ENCODE measurements at regions of chr11 and their contacts with region 1.

Region 1: GRCh38 chr11:126355324-126355925 is at the start of gene ST3GAL4:
- DNase-seq: peak; percentile 82
- H3K4me3 Mint-ChIP-seq: peak within 1 kb of the TSS; percentile 92
- H3K27ac Mint-ChIP-seq: peak within 1 kb of the TSS; percentile 78
- H3K4me1 Mint-ChIP-seq: peaks cover 34% of the 10 kb centered on the region
- H3K27me3 Mint-ChIP-seq: no peaks in the 10 kb centered on the region
- total RNA-seq, gene ST3GAL4: 9.8 to 10.7 TPM

Region 2: GRCh38 chr11:126282736-126283591 is 72.5 kb before region 1 on chr11 and contains the start of gene TIRAP:
- CTCF ChIA-PET with region 1: interaction called, 5 read pairs
- POLR2A ChIA-PET with region 1: interaction called, 5 read pairs
- intact Hi-C with region 1: loop called (anchors 2 kb)
- DNase-seq: peak; percentile 73
- H3K4me3 Mint-ChIP-seq: peak within 1 kb of the TSS; percentile 97
- H3K27ac Mint-ChIP-seq: peak within 1 kb of the TSS; percentile 91
- H3K4me1 Mint-ChIP-seq: peaks cover 39% of the 10 kb centered on the region
- H3K27me3 Mint-ChIP-seq: no peaks in the 10 kb centered on the region
- total RNA-seq, gene TIRAP: 7.3 to 8.8 TPM

Region 3: GRCh38 chr11:126303623-126304456 is 51.6 kb before region 1 on chr11 and contains the start of gene DCPS:
- CTCF ChIA-PET with region 1: interaction called, 7 read pairs
- POLR2A ChIA-PET with region 1: interaction called, 8 read pairs
- intact Hi-C with region 1: loop called (anchors 1 kb)
- DNase-seq: peak; percentile 92
- H3K4me3 Mint-ChIP-seq: peak within 1 kb of the TSS; percentile 95
- H3K27ac Mint-ChIP-seq: peak within 1 kb of the TSS; percentile 96
- H3K4me1 Mint-ChIP-seq: peaks cover 34% of the 10 kb centered on the region
- H3K27me3 Mint-ChIP-seq: no peaks in the 10 kb centered on the region
- total RNA-seq, gene DCPS: 40.1 to 43.9 TPM

Region 4: DNA sequence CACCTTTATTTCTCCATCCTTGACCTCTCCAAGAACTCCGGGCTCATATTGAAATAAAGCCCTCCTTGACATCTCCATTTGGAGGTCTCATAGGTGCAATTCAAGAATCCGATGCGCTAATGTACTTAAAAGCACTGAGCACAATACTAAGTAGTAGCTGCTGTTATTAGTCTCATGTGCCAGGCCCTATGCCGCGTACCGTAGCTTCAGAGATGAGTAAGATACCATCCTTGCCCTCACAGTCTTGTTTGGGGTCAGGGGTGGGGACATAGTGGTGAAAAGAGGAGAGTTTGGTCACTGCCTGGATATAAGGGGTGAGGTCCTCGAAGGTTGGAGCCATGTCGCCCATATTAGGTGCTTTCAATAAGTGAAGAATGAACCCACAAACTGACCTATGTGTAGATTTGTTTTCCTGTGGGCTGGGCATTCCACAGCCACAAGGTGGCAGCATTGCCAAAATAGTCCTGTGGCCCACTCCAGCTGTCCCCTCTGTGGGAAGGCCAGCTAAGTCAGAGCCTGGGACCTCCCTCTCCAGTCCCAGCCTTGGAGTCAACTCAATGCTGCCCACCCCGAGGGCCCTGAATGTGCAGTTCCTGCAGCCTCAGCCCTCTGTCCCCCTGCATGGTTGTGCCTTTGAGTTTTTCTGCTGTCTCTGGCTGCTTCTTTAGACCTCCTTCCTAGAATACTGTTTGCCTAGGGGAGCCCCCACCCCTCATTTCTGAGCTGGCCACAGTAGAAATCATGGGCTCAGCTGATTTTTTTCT is 45.0 kb before region 1 on chr11:
- CTCF ChIA-PET with region 1: interaction called, 26 read pairs
- POLR2A ChIA-PET with region 1: no interaction called
- intact Hi-C with region 1: no loop called
- DNase-seq: peak; percentile 70
- H3K4me3 Mint-ChIP-seq: no peak overlapping the region
- H3K27ac Mint-ChIP-seq: no peak overlapping the region
- H3K4me1 Mint-ChIP-seq: peaks cover 22% of the 10 kb centered on the region
- H3K27me3 Mint-ChIP-seq: no peaks in the 10 kb centered on the region

Region 5: GRCh38 chr11:126318574-126319373 is 36.7 kb before region 1 on chr11:
- CTCF ChIA-PET with region 1: interaction called, 3 read pairs
- POLR2A ChIA-PET with region 1: interaction called, 3 read pairs
- intact Hi-C with region 1: loop called (anchors 1 kb)
- DNase-seq: peak; percentile 43
- H3K4me3 Mint-ChIP-seq: no peak overlapping the region
- H3K27ac Mint-ChIP-seq: peak overlapping the region; percentile 75
- H3K4me1 Mint-ChIP-seq: peaks cover 30% of the 10 kb centered on the region
- H3K27me3 Mint-ChIP-seq: no peaks in the 10 kb centered on the region

Region 6: DNA sequence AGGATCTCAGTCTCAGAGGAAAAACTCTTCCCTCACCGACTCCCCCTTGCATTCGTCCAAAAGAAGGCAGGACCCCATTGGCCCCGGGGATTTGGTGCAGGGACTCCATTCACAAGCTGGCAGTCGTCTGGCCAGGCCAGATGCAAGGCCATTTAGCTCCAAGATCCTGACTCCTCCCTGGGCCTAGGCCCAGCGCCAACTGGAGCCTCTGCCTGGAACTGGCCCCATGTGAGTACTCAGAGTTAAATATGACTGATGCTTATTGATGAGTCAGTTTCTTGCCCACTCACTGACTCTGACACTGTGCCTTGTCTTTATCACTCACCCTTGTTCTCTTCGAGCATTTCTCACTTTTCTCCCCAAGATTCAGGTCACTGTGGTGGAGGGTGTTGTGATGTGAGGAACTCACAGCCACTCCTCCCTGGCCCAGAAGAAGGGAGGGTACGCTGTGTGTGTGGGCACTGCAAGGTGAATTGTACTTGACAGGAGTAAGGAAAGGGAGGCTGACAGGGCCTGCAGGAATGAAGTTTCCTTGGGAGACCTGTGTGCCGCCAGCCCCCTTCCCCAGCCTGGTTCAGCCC is 23.2 kb before region 1 on chr11:
- CTCF ChIA-PET with region 1: no interaction called
- POLR2A ChIA-PET with region 1: no interaction called
- intact Hi-C with region 1: loop called (anchors 1 kb)
- DNase-seq: peak; percentile 56
- H3K4me3 Mint-ChIP-seq: no peak overlapping the region
- H3K27ac Mint-ChIP-seq: peak overlapping the region; percentile 40
- H3K4me1 Mint-ChIP-seq: peaks cover 21% of the 10 kb centered on the region
- H3K27me3 Mint-ChIP-seq: no peaks in the 10 kb centered on the region

Region 7: GRCh38 chr11:126375726-126376125 is 20.3 kb after region 1 on chr11:
- CTCF ChIA-PET with region 1: no interaction called
- POLR2A ChIA-PET with region 1: no interaction called
- intact Hi-C with region 1: no loop called
- DNase-seq: no peak
- H3K4me3 Mint-ChIP-seq: no peak overlapping the region
- H3K27ac Mint-ChIP-seq: no peak overlapping the region
- H3K4me1 Mint-ChIP-seq: no peaks in the 10 kb centered on the region
- H3K27me3 Mint-ChIP-seq: no peaks in the 10 kb centered on the region

Region 8: GRCh38 chr11:126394031-126394430 is 38.6 kb after region 1 on chr11:
- CTCF ChIA-PET with region 1: no interaction called
- POLR2A ChIA-PET with region 1: no interaction called
- intact Hi-C with region 1: no loop called
- DNase-seq: no peak
- H3K4me3 Mint-ChIP-seq: no peak overlapping the region
- H3K27ac Mint-ChIP-seq: no peak overlapping the region
- H3K4me1 Mint-ChIP-seq: no peaks in the 10 kb centered on the region
- H3K27me3 Mint-ChIP-seq: no peaks in the 10 kb centered on the region

Region 9: DNA sequence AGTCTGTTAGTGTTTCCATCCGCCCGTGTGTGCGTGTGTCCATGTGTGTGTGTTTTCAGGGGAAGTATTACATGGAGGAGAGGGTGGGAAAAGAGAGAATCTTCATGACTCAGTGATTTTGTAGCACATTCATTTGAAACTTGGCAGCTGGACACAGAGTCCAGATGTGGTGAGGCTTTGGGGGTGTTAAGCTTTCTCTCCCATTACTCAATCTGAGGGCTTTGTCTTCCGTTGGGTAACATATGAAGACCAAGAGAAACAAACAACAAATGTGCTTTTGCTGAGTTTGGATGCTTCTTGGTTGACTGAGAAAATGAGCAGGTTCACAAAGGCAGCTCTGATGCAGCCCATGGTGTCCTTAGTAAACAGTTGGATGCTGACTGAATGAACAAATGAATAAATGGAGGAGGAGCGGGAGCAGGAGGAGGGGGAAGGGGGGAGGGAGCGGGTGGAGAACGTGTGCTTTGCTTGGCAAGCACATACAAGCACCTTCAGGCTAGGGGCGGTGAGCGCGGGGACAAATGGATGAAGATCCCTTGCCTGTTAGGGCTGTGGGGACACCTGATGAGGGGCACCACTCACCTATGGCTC is 104.4 kb after region 1 on chr11:
- CTCF ChIA-PET with region 1: no interaction called
- POLR2A ChIA-PET with region 1: no interaction called
- intact Hi-C with region 1: no loop called
- DNase-seq: no peak
- H3K4me3 Mint-ChIP-seq: no peak overlapping the region
- H3K27ac Mint-ChIP-seq: no peak overlapping the region
- H3K4me1 Mint-ChIP-seq: no peaks in the 10 kb centered on the region
- H3K27me3 Mint-ChIP-seq: peaks cover 2% of the 10 kb centered on the region

Region 10: DNA sequence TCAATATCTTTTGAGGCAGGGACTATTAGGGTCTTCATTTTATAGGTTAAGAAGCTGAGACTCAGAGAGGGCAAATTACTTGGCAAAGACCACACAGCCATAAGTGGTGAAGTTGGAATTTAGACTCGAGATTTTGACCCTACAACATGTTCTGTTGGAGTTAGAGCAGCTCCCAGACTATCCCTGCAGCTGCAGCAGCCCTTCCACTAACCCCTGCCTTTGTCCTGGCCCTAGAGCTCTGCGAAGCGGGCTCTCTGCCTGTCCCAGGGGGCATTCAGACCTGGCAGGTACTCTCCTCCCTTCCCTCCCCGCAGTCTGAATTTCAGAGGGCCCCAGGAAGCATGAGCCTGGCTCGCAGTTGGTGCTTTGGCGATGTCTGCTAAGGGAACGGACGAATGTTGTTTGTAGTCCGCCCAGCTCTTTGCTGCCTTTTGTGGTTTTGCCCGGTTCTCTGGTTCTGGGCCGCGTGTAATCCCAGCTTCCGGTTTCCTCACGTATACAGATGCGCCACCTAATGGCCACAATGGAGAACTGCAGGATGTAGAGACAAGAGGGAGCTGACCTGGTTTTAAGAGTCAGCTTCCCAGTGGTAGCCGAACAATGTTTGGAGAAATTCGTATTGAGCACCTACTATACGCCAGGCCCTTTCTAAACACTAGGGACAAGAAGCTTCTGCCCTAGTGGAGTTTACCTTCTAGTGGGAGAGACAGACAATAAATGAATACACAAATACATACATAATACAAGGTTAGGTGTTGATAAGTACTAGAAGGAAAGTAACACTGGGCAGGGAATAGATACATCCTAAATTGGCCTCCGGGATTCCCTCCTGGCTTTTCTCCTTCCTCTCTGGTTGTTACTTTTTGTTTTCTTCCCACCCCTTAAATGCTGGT is 125.2 kb after region 1 on chr11:
- CTCF ChIA-PET with region 1: interaction called, 13 read pairs
- POLR2A ChIA-PET with region 1: interaction called, 3 read pairs
- intact Hi-C with region 1: no loop called
- DNase-seq: peak; percentile 80
- H3K4me3 Mint-ChIP-seq: peak overlapping the region; percentile 22
- H3K27ac Mint-ChIP-seq: peak overlapping the region; percentile 31
- H3K4me1 Mint-ChIP-seq: peaks cover 17% of the 10 kb centered on the region
- H3K27me3 Mint-ChIP-seq: peaks cover 1% of the 10 kb centered on the region